ENCODE measurements at regions of chr19 and their contacts with region 1.

Region 1: DNA sequence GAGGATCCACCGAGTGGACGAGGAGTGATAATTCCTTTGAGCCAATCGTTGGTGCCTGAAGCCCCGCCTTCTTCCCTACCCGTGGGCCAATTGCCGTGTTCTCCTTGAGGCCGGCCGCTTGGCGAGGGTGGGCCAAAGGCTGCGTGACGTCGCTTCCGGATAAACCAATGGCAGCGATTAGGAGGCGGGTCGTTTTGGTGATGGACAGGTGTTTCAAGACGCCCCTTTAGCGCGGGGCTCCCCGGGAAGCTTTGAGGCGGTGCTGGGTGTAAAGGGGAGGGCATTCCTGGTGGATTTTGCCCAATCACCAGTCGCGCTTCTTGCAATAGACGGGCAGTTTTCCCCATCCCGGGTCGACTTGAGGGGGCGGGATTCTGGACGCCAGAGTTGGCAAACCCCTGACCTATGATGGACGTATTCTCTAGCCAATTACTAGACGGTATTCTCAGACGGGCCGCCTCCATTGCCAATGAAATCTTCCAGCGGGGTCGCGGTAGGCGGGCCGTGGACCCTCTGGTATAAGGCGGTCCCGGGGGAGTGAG is 310 bp upstream of the PRMT1 start:
- DNase-seq: peak; percentile 99
- ATAC-seq: peak; percentile 92

Region 2: GRCh38 chr19:49451430-49452181 is 225.2 kb before region 1 on chr19 and contains the start of gene PIH1D1:
- intact Hi-C with region 1: loop called (anchors 5 kb)
- DNase-seq: peak; percentile 98
- ATAC-seq: peak; percentile 83
- total RNA-seq, gene PIH1D1: 32.4 TPM

Region 3: GRCh38 chr19:49590071-49590970 is 86.4 kb before region 1 on chr19:
- intact Hi-C with region 1: loop called (anchors 5 kb)
- DNase-seq: peak; percentile 98
- ATAC-seq: peak; percentile 89

Region 4: GRCh38 chr19:49766007-49766937 is 89.5 kb after region 1 on chr19:
- intact Hi-C with region 1: loop called (anchors 1 kb)
- DNase-seq: peak; percentile 100
- ATAC-seq: peak; percentile 93

Region 5: DNA sequence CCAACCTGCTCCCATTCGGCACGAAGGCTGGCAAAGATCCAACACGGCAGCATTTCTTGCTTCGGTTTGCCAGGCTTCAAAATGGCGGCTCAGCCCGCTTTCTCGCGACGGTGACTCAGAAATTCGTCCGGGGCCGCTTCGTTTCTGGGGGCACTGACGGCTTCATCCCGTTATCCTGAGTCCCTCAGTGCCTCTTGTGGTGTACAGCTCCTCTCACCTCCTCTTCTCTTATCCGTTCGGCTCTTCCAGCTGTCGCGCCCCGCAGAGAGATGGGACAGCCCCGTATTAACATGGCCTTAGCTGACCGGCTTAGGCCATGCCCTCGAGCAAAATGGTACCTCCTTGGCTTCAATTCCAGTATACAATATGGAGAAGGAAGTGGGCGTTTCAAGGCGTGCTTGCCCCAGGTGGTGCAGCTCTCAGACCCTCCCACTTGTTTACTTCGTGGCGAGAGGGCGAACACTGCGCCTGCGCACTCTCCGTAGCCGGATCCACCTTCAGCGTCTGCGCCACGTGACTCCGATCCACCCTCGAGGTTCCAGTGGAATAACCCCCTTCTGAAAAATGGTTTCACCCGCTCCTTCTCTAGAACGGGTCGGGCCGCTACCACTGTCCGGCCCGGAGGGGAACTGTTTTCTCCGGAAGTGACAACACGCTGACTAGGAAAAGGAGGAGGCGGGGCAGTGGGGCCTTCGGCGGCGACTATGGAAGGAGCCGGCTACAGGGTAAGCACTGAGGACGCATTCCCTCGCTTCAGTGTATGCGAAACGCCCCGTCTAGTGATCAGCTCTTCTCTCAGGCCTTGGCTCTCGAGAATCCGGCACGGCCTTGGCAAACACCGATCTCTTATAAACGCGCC is 200.5 kb after region 1 on chr19 and contains the starts of genes AKT1S1 and TBC1D17:
- intact Hi-C with region 1: loop called (anchors 5 kb)
- DNase-seq: peak; percentile 99
- ATAC-seq: peak; percentile 83
- total RNA-seq, gene AKT1S1: 37.2 TPM
- total RNA-seq, gene TBC1D17: 44.9 TPM